AG04449 (cell line): ENCODE measurements at regions of chr1 and their contacts with region 1.

Region 1: DNA sequence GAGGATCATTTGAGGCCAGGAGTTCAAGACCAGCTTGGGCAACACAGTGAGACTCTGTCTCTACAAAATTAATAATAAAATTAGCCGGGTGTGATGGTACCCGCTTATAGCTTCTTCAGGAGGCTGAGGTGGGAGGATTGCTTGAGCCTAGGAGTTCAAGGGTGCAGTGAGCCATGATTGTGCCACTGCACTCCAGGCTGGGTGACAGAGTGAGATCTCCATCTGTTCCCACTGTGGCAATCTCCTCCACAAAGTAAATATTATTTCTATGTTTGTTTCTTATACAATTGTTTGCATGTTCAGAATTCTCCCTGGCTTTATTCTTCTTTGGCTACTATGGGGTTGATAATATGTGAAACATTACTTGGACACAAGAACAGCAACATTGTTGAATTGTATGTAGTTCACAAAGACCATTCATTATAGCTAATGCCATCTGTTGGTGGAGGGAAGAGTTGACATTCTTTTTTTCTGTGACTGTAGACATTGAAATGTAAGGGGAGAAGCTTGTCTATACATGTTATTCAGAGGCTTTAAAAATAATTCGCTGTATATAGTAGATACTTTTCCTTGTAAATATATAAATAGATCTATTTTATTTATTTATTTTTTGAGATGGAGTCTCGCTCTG is 47.8 kb upstream of the SRSF10 start:
- DNase-seq: no peak
- H3K4me3 ChIP-seq: no peak overlapping the region
- CTCF ChIP-seq: peak; percentile 54

Region 2: DNA sequence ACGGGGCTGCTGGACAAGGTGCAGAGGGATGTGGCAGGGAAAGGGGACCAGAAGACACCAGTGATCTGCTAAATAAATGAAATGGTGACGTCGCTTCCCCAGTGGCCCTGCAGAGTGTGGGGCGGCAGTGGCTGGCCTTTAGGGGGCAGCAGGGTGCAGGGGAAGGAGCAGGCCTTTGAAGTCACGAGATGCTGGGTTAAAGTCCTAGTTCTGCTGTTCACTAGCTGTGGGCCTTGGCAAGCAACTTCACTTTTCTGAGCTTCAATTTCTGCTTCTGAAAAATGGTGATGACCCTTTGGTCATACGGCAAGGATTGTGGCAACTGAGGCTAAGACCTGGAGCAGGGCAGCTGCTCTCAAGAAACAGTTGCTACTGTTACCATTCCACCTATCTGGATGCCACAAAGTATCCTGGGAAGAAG is 218.2 kb before region 1 on chr1:
- CTCF ChIA-PET with region 1: interaction called, 12 read pairs
- POLR2A ChIA-PET with region 1: no interaction called
- DNase-seq: no peak
- H3K4me3 ChIP-seq: no peak overlapping the region
- CTCF ChIP-seq: peak; percentile 84

Region 3: DNA sequence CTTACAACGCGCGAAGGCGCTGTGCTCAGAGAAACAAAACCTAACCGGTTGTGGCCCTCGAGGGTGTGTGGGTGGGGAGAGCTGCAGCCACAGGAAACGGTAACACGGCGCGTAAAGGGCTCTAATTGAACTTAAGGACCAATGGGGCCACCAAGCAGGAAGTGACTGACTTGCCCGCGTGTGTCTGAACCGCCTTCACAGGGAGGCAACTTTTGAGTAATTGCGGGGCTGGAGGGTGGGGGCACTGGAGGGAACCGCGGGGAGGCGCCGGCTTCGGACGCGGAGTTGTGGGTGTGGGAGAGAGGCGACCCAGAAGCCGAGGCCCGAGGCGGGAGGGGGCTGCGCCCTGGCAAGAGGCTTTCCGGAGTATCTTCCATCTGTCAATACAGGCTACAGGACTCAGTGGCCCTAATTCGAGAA is 68.9 kb before region 1 on chr1:
- CTCF ChIA-PET with region 1: interaction called, 23 read pairs
- POLR2A ChIA-PET with region 1: no interaction called
- DNase-seq: peak; percentile 65
- H3K4me3 ChIP-seq: peak overlapping the region; percentile 55
- CTCF ChIP-seq: peak; percentile 53

Region 4: DNA sequence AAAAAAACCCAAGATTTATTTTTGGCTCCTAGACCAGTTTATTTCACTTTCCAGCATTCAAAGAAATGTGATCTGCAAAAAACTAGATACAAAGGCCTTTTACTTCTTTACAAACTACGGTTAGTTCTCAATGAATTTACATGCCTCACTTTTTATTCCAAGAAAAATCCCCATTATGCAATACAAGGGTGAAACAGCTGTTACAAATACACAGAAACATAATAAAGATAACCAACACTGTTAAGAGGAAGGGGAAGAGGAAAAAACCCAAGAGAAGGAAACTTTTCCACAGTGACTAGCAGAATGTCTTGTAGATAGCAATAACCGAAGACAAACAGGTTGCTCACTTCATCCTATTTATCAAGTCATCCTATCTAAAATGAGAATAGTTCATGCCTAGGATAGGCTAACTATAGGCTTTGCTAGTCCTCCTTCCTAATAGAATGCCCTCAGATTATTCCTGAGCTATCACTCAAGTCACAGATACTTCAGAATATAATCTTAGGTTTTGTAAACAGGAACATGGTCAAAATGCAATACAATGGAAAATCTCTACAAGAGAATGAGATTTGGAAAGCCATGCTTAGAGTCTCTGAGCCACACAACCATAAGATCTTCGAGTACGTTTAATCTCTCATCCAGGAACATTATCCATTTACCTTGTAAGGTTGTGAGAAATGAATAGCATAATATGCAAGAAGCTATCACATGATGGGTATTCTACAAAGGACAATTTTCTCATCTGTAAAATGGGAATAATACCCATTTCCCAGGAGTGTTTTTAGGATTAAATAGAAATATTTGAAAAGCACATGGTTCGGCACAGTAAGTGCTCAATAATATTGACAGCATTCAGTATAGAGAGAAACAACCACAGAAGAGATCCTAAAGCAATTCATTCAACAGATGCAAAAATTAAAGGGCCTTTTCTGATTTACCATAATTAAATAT is 62.9 kb before region 1 on chr1:
- CTCF ChIA-PET with region 1: interaction called, 23 read pairs
- POLR2A ChIA-PET with region 1: no interaction called
- DNase-seq: no peak
- H3K4me3 ChIP-seq: no peak overlapping the region
- CTCF ChIP-seq: no peak

Region 5: DNA sequence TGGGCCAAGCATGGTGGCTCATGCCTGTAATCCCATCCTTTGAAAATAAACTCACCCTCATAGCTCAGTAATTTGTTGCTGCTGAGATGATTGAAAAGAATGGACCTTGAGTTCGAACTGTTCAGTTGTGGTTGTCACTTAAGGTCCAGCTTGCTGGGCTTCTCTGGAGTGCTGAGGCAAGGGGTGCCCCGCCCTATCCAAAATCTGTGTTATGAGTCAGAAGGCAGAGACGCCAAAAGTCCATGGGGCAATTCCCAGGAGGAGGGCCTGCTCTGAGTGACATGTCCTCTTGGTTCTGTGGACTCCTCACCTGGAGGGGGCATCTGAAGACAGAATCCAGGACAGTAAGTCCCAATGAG is 19.1 kb after region 1 on chr1:
- CTCF ChIA-PET with region 1: interaction called, 20 read pairs
- POLR2A ChIA-PET with region 1: interaction called, 3 read pairs
- DNase-seq: no peak
- H3K4me3 ChIP-seq: no peak overlapping the region
- CTCF ChIP-seq: no peak

Region 6: DNA sequence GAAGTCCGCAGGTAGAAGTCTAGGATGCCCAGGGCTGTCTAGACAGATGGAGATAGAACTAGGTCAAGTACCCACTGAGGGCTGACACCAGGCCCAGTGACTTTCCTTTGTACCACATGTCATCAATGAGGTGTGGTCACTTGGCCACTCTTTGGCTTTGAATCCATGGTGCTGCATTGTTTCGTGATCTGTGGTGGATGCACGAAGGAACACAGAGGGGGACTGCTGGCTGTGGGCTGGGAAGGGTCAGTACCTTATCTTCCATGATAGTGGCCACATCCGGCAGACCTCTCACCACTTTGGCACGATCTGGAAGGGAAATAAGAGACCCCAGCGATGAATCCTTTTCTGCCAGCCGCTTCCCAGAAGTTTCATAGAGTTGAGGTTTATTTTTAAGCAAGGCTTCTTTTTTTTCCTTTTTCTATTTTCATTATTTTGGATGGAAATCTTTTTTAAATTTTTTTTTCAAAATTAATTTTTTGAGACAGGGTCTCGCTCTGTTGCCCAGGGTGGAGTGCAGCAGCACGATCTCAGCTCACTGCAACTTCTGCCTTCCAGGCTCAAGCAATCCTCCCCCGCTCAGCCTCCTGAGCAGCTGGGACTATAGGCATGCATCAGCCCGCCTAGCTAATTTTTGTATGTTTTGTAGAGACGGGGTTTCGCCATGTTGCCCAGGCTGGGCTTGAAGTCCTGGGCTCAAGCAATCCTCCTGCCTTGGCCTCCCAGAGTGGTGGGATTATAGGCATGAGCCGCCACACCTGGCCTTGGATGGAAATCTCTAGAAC is 30.9 kb after region 1 on chr1:
- CTCF ChIA-PET with region 1: no interaction called
- POLR2A ChIA-PET with region 1: no interaction called
- DNase-seq: no peak
- H3K4me3 ChIP-seq: no peak overlapping the region
- CTCF ChIP-seq: no peak